ENCODE measurements at regions of chr6 and their contacts with region 1.

Region 1: DNA sequence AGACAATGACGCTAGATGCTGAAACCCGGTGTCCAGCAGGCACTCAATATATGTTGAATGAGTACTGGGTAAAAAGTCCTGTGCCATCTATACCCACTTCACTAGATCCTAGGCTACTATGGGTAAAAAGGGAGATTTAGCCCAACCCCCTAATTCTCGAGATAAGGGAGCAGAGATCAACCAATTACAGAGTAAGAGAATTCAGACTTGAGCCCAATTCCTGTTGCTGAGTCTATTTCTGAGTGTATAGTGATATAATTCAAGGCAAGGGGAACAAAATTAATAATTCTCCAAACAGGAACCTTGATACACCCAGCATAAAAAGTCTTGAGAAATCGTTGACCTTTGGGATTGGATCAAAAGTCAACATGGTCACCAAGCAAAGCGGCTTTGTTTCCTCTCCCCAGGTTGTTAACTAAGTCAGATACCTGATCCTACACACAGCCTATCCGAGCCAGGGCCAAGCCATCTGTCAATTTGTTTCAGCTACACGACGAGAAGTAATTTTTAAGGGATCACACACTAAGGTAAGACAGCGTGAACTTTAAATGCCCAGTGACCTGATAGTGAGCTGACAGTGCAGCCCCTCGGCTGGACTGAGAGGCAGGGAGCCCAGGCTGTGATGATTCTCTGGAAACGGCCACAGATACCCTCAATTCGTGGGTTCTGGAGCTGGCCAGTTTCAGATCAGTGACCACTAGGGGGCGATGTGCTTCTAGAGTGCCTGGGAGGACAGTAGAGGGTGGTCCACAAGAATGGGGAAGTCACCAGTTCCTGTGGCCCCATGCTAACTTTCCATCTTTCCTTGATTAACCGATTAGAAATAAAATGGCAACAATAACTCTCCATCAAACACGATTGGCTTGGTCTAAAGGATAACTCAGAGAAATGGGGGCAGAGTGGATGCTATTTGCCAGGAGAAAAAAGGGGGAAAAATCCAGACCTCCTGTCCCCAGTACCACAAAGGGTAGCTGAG is 46.2 kb downstream of the SLC22A23 start:
- DNase-seq: no peak
- ATAC-seq: peak; percentile 93
- H3K4me3 ChIP-seq: no peak overlapping the region
- H3K27ac ChIP-seq: no peak overlapping the region
- H3K4me1 ChIP-seq: peaks cover 9% of the 10 kb centered on the region
- H3K27me3 ChIP-seq: no peaks in the 10 kb centered on the region
- CTCF ChIP-seq: peak; percentile 55 to 75 (median 73)
- EP300 ChIP-seq: no peak
- POLR2A ChIP-seq: no peak
- RAD21 ChIP-seq: peak; percentile 68

Region 2: DNA sequence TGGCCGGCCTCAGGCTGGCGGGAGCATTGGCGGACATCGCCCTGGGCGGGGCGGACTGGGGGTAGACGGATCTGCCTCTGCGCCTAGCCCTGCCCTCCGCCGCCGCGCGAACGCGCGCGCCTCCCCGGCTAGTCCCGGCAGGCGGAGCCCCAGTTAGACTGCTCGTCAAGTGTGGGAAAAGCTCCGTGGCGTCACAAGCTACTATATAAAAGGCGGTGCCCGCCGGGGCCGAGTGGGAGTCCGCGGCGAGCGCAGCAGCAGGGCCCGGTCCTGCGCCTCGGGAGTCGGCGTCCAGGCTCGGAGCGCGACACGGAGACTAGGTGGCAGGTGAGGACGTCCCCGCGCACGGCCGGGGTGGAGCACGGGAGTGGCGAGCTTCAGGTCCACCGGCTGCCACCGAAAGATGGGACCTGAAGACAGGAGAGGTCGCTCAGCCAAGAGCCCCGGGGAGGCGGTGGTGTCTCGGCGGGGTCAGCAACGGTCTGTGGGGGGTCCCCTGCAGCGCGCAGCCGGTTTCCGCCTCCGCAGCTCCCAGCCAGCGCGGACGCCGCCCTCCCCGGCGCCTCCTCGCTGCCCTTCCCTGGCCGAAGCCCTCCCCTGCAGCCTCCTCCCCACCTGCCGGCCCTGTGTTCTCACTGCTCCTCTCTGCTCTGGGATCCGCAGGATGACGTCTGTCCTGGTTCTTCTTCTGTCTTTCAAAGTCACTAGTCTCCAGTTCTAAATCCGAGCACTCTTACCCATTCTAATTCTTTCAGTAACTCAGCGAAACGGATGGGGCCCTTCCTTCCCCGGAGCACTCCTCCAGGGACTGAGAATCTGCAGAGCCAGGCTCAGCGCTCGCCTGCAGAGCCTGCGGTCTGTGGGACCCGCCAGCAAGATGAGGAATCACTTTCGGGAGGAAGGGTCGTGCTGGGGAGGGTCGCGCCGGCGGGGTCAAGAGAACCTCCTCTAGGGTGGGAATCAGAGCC is 346.7 kb before region 1 on chr6:
- CTCF ChIA-PET with region 1: no interaction called
- POLR2A ChIA-PET with region 1: no interaction called
- RAD21 ChIA-PET with region 1: no interaction called
- SMC1A ChIA-PET with region 1: no interaction called
- in situ Hi-C with region 1: no loop called
- intact Hi-C with region 1: no loop called
- DNase-seq: peak; percentile 34
- ATAC-seq: peak; percentile 88
- H3K4me3 ChIP-seq: peak overlapping the region; percentile 69
- H3K27ac ChIP-seq: no peak overlapping the region
- H3K4me1 ChIP-seq: no peaks in the 10 kb centered on the region
- H3K27me3 ChIP-seq: no peaks in the 10 kb centered on the region
- CTCF ChIP-seq: peak in 1 of 3 experiments; percentile 6; a peak in 1 of 6 replicates
- EP300 ChIP-seq: no peak
- POLR2A ChIP-seq: peak; percentile 85
- RAD21 ChIP-seq: no peak

Region 3: GRCh38 chr6:3337521-3338350 is 72.9 kb before region 1 on chr6:
- CTCF ChIA-PET with region 1: interaction called, 12 read pairs
- POLR2A ChIA-PET with region 1: no interaction called
- RAD21 ChIA-PET with region 1: interaction called, 5 read pairs
- SMC1A ChIA-PET with region 1: interaction called, 9 read pairs
- in situ Hi-C with region 1: no loop called
- intact Hi-C with region 1: no loop called
- DNase-seq: no peak
- ATAC-seq: peak; percentile 47
- H3K4me3 ChIP-seq: peak overlapping the region; percentile 25; the same call in 1 of the 2 replicates
- H3K27ac ChIP-seq: peak overlapping the region; percentile 5; the same call in 1 of the 2 replicates
- H3K4me1 ChIP-seq: peaks cover 25% of the 10 kb centered on the region
- H3K27me3 ChIP-seq: no peaks in the 10 kb centered on the region
- CTCF ChIP-seq: peak in 2 of 3 experiments; percentile 15 to 16; a peak in 2 of 6 replicates
- EP300 ChIP-seq: peak in 1 of 2 experiments; percentile 17; a peak in 1 of 4 replicates
- POLR2A ChIP-seq: no peak
- RAD21 ChIP-seq: no peak

Region 4: DNA sequence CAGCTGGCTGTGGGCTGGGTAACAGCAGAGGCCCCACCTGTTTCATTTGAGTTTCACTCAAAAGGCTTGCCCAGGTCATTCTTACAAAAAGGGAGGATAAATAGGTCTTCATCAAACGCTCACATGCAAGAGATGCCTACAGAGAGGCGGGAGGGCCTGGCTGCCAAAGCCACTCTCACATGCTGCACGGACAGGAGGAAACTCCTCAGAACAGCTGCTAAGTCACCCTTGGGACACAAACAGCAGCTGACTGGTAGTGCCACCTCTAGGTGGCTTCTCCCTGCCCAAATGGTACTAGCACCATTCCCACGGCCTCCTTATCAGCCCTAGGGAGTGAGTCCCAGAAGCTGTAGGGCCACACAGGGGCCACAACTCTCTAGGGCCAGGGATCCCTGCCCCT is 22.3 kb after region 1 on chr6:
- CTCF ChIA-PET with region 1: interaction called, 19 read pairs
- POLR2A ChIA-PET with region 1: no interaction called
- RAD21 ChIA-PET with region 1: interaction called, 12 read pairs
- SMC1A ChIA-PET with region 1: interaction called, 5 read pairs
- in situ Hi-C with region 1: no loop called
- intact Hi-C with region 1: no loop called
- DNase-seq: no peak
- ATAC-seq: peak; percentile 56
- H3K4me3 ChIP-seq: no peak overlapping the region
- H3K27ac ChIP-seq: no peak overlapping the region
- H3K4me1 ChIP-seq: peaks cover 8% of the 10 kb centered on the region
- H3K27me3 ChIP-seq: no peaks in the 10 kb centered on the region
- CTCF ChIP-seq: peak; percentile 10 to 27 (median 18); a peak in 3 of 6 replicates
- EP300 ChIP-seq: no peak
- POLR2A ChIP-seq: no peak
- RAD21 ChIP-seq: no peak

Region 5: DNA sequence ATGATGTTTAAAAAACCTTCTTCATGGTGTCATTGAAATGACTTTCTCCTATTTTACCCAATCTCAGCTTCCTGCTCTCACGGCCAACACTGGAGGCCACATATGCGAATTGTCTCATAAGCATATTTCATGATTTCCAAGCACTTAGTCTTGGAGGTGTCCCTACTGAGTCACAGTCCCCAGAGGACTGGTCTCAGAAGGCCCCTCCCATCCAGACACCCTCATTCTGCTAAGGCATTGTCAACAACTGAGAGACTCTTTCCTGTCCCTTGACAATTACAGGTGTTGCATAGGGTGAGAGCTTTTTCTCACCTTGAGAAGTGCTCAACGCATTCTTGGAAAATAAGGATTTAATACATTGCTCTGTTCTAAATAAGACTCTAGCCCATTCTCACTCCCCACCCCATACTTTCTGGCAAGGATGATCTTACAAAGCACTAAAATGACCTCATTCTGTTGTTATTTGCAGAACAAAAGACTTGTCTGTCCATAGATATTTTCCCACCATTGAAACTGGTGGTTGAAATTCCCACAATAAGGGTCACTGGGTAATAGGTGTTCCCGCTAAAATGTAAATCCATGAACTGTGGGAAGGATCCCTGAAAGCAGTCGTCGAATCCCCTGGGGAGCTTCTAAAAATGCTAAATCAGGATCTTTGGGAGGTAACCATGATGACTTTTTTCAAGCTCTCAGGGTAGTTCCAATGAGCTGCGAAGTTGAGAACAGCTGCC is 78.5 kb after region 1 on chr6:
- CTCF ChIA-PET with region 1: no interaction called
- POLR2A ChIA-PET with region 1: no interaction called
- RAD21 ChIA-PET with region 1: no interaction called
- SMC1A ChIA-PET with region 1: no interaction called
- in situ Hi-C with region 1: no loop called
- intact Hi-C with region 1: no loop called
- DNase-seq: no peak
- ATAC-seq: no peak
- H3K4me3 ChIP-seq: no peak overlapping the region
- H3K27ac ChIP-seq: no peak overlapping the region
- H3K4me1 ChIP-seq: no peaks in the 10 kb centered on the region
- H3K27me3 ChIP-seq: peaks cover 3 to 6% of the 10 kb centered on the region in 2 experiments; a peak in 3 of 4 replicates
- CTCF ChIP-seq: no peak
- EP300 ChIP-seq: no peak
- POLR2A ChIP-seq: no peak
- RAD21 ChIP-seq: no peak

Region 6: DNA sequence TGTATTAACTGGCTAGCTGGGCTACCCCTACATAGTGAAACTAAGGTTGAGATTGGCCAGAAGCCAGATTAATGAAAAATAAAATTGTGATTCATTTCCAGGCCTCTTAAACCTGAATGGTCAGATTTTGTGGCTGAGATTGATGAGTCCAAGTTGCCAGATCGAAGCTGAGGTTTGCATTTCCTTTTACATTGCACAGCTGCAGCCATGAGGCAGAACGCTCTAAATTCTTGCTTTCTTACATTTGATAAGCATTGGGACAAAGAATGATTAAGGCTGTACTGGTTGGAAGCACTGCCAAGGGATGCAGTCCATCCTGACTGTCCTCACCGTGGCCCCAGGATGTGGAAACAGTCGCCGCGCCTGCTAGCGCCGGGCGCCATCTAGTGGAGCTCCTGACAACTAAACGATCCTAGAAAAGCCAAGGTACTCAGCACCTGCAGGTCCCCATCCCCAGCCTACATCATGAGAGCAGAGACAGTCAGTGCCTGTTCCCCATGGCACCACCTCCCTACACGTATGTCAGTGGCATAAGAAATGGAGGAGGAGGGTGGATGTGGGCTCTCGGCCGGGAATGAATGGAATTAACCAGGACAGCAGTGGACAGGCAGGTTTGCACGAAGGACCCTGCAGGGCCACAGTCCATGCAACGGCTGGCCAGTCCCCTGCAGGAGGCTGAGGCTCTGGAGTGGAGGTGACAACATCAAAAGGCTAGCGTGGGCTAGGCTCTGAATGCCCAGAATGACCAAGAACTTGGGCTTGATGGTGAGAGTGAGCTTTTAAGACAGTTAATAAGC is 321.9 kb after region 1 on chr6:
- CTCF ChIA-PET with region 1: interaction called, 28 read pairs
- POLR2A ChIA-PET with region 1: no interaction called
- RAD21 ChIA-PET with region 1: interaction called, 5 read pairs
- SMC1A ChIA-PET with region 1: interaction called, 20 read pairs
- in situ Hi-C with region 1: no loop called
- intact Hi-C with region 1: loop called (anchors 2 kb)
- DNase-seq: no peak
- ATAC-seq: peak; percentile 96
- H3K4me3 ChIP-seq: no peak overlapping the region
- H3K27ac ChIP-seq: no peak overlapping the region
- H3K4me1 ChIP-seq: no peaks in the 10 kb centered on the region
- H3K27me3 ChIP-seq: no peaks in the 10 kb centered on the region
- CTCF ChIP-seq: peak; percentile 91 to 95 (median 91)
- EP300 ChIP-seq: no peak
- POLR2A ChIP-seq: no peak
- RAD21 ChIP-seq: peak; percentile 92

Region 7: GRCh38 chr6:4687989-4688947 is 1277.6 kb after region 1 on chr6:
- CTCF ChIA-PET with region 1: no interaction called
- POLR2A ChIA-PET with region 1: no interaction called
- RAD21 ChIA-PET with region 1: no interaction called
- SMC1A ChIA-PET with region 1: no interaction called
- in situ Hi-C with region 1: no loop called
- intact Hi-C with region 1: no loop called
- DNase-seq: no peak
- ATAC-seq: no peak
- H3K4me3 ChIP-seq: no peak overlapping the region
- H3K27ac ChIP-seq: no peak overlapping the region
- H3K4me1 ChIP-seq: no peaks in the 10 kb centered on the region
- H3K27me3 ChIP-seq: no peaks in the 10 kb centered on the region
- CTCF ChIP-seq: no peak
- EP300 ChIP-seq: no peak
- POLR2A ChIP-seq: no peak
- RAD21 ChIP-seq: no peak